HEK293 (cell line): ENCODE measurements at regions of chr2 and their contacts with region 1.

Region 1: DNA sequence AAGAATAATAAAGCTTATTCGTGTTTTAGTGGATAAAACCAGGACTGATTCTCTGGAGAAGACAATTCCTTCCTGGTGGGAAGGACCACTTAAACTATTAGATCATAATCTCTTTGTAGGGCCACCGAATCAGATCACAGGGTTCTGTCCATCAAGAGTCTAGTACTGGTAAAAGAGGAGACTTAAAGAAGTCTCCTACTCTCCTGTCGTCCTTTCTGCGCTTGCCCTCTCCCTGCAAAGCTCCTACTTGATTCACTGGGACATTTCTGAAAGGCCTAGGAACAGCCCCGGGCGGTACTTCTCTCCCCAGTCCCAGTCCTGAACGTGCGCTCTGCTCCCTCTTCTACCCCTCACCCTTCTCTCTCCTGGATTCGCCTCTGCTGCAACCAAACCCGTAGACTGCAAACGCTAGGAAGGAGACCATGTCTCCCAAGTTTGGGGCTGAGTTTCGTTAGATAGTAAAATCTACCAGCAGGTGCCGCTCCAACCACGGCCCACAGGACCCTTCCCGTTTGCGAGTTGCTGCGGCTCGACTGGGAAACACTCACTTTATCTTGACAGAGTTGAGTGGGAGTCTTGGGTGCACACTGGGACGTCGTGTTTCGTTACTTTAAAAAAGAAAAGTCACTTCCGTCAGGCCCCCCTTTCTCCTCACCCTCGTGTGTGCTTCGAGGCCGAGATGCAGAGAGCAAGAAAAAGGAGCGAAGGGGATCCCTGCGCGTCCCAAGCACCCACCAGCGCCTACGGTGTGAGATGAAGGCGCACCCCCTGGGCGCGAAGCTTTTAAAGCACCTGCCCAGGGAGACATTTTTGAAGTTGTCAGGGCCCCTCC is 923 bp downstream of the FIGLA start:
- H3K4me3 ChIP-seq: no peak overlapping the region
- H3K27ac ChIP-seq: no peak overlapping the region
- H3K4me1 ChIP-seq: no peaks in the 10 kb centered on the region
- CTCF ChIP-seq: peak; percentile 84

Region 2: GRCh38 chr2:70656421-70657010 is 133.0 kb before region 1 on chr2:
- CTCF ChIA-PET with region 1: interaction called, 20 read pairs
- POLR2A ChIA-PET with region 1: no interaction called
- H3K4me3 ChIP-seq: no peak overlapping the region
- H3K27ac ChIP-seq: no peak overlapping the region
- H3K4me1 ChIP-seq: no peaks in the 10 kb centered on the region
- CTCF ChIP-seq: no peak

Region 3: GRCh38 chr2:70686577-70687460 is 102.7 kb before region 1 on chr2:
- CTCF ChIA-PET with region 1: interaction called, 20 read pairs
- POLR2A ChIA-PET with region 1: no interaction called
- H3K4me3 ChIP-seq: no peak overlapping the region
- H3K27ac ChIP-seq: no peak overlapping the region
- H3K4me1 ChIP-seq: no peaks in the 10 kb centered on the region; the same call in 1 of the 2 replicates
- CTCF ChIP-seq: peak; percentile 28

Region 4: GRCh38 chr2:70799706-70800105 is 10.2 kb after region 1 on chr2:
- CTCF ChIA-PET with region 1: interaction called, 15 read pairs
- POLR2A ChIA-PET with region 1: no interaction called
- H3K4me3 ChIP-seq: no peak overlapping the region
- H3K27ac ChIP-seq: no peak overlapping the region
- H3K4me1 ChIP-seq: no peaks in the 10 kb centered on the region
- CTCF ChIP-seq: no peak

Region 5: GRCh38 chr2:70850925-70851324 is 61.4 kb after region 1 on chr2:
- CTCF ChIA-PET with region 1: no interaction called
- POLR2A ChIA-PET with region 1: no interaction called
- H3K4me3 ChIP-seq: no peak overlapping the region
- H3K27ac ChIP-seq: no peak overlapping the region
- H3K4me1 ChIP-seq: no peaks in the 10 kb centered on the region; the same call in 1 of the 2 replicates
- CTCF ChIP-seq: no peak